ENCODE measurements at regions of chr15 and their contacts with region 1.

Region 1: GRCh38 chr15:85687329-85687728 is 107.4 kb downstream of the KLHL25 start:
- DNase-seq: no peak
- H3K4me3 ChIP-seq: no peak overlapping the region
- H3K27me3 ChIP-seq: no peaks in the 10 kb centered on the region
- CTCF ChIP-seq: no peak

Region 2: GRCh38 chr15:84947947-84948830 is 739.1 kb before region 1 on chr15:
- CTCF ChIA-PET with region 1: no interaction called
- POLR2A ChIA-PET with region 1: interaction called, 11 read pairs
- DNase-seq: peak; percentile 82
- H3K4me3 ChIP-seq: no peak overlapping the region
- H3K27me3 ChIP-seq: no peaks in the 10 kb centered on the region
- CTCF ChIP-seq: no peak

Measured in BJ (cell line).